ENCODE measurements at regions of chr3 and their contacts with region 1.

Region 1: DNA sequence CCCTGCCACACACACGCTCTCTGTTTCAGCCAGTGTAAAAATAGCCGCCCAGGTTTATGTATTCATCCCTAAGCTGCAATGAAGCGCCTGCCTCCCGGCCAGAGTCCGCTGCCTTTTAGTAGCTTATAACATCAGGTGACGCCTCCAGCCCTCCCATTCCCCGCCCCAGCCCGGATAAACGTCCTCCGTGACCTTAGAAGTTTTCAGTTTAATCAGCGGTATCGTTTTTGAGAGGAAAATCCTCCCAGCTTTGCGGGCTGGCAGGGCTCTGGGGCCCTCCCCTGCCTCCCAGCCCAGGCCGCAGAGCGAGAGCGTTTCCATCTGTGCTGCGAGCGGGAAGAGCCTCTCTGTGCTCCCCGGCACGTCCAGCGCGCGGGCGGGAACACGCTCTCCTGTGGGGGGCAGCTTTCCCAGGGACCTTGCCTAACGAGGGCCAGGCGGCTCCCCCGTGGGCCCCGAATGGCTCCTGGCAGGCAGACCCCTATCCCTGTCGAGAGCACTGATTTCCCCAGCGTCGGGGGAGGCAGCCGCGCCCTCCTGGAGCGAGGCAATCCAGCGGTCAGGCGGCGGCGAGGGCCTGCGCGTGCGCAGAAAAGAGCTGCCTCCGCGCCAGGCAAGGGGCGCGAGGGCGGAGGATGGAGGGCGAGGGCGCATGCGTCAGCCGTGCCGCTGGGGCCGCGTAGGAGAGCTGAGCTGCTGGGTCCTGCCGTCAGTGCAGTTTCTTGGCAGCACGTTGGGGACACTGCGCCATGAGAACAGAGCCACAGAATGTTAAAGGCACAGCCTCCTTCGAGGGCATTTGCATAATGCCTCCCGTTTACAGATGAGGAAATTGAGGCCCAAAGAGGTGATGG is 71.1 kb downstream of the CCNL1 start:
- DNase-seq: peak; percentile 94 to 95 (median 94)
- H3K4me3 ChIP-seq: peak overlapping the region; percentile 49 to 76
- H3K4me3 Mint-ChIP-seq: peak overlapping the region; percentile 79 to 93 (median 89)
- H3K27ac ChIP-seq: peak overlapping the region; percentile 91
- H3K27ac Mint-ChIP-seq: peak overlapping the region; percentile 99 to 100 (median 99)
- H3K4me1 ChIP-seq: peaks cover 41% of the 10 kb centered on the region
- H3K4me1 Mint-ChIP-seq: peaks cover 30 to 50% (median 41%) of the 10 kb centered on the region in 4 donors
- H3K27me3 ChIP-seq: no peaks in the 10 kb centered on the region
- H3K27me3 Mint-ChIP-seq: no peaks in the 10 kb centered on the region

Region 2: GRCh38 chr3:156816800-156817645 is 271.8 kb before region 1 on chr3:
- CTCF ChIA-PET with region 1: interaction called, 3 read pairs
- POLR2A ChIA-PET with region 1: interaction called, 32 read pairs
- intact Hi-C with region 1: loop called (anchors 2 kb)
- DNase-seq: peak; percentile 79 to 85 (median 84)
- H3K4me3 ChIP-seq: peak overlapping the region; percentile 43 to 59
- H3K4me3 Mint-ChIP-seq: peak overlapping the region; percentile 91 to 97 (median 96)
- H3K27ac ChIP-seq: peak overlapping the region; percentile 73
- H3K27ac Mint-ChIP-seq: peak overlapping the region; percentile 91 to 98 (median 94)
- H3K4me1 ChIP-seq: peaks cover 39% of the 10 kb centered on the region
- H3K4me1 Mint-ChIP-seq: peaks cover 22 to 45% (median 35%) of the 10 kb centered on the region in 4 donors
- H3K27me3 ChIP-seq: no peaks in the 10 kb centered on the region
- H3K27me3 Mint-ChIP-seq: no peaks in the 10 kb centered on the region

Region 3: GRCh38 chr3:157099326-157100095 is 10.7 kb after region 1 on chr3:
- CTCF ChIA-PET with region 1: interaction called, 18 read pairs
- POLR2A ChIA-PET with region 1: interaction called, 43 read pairs
- intact Hi-C with region 1: loop called (anchors 2 kb)
- DNase-seq: no peak
- H3K4me3 ChIP-seq: no peak overlapping the region
- H3K4me3 Mint-ChIP-seq: no peak overlapping the region
- H3K27ac ChIP-seq: no peak overlapping the region
- H3K27ac Mint-ChIP-seq: peak overlapping the region in 1 of 7 donors; percentile 15
- H3K4me1 ChIP-seq: peaks cover 19% of the 10 kb centered on the region
- H3K4me1 Mint-ChIP-seq: peaks cover 11 to 29% (median 17%) of the 10 kb centered on the region in 4 donors
- H3K27me3 ChIP-seq: no peaks in the 10 kb centered on the region
- H3K27me3 Mint-ChIP-seq: no peaks in the 10 kb centered on the region

Region 4: DNA sequence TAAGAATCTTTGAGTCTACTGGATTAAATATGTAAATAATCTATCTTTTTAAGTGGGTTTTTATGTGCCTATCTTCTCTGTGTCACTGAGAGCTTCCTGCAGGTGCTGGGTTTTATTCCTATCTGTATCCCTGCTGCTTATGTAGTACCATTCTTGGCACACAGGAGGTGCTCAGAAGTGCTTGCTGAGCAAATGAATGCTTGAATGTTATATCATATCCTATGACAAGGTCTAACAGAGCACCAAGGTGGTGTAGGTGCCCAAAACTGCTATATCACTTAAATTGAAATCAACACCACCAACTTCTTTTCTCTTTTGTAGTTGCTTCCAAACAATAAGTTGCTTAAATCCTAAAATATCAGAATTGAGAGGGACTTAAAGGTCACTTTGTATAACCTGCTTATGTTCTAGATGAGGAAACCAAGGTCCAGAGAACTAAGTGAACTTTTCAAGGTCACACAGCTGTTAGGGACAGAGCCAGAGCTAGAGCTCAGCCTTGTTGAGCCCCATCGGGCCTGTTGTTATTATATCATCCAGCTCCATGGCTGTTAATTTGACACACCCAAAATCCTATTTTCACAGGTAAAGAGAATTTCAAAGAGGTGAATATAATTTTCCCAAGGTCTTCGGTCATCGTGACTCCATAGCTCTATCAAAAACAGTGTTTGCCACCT is 25.1 kb after region 1 on chr3:
- CTCF ChIA-PET with region 1: interaction called, 10 read pairs
- POLR2A ChIA-PET with region 1: interaction called, 25 read pairs
- intact Hi-C with region 1: no loop called
- DNase-seq: no peak
- H3K4me3 ChIP-seq: no peak overlapping the region
- H3K4me3 Mint-ChIP-seq: no peak overlapping the region
- H3K27ac ChIP-seq: no peak overlapping the region
- H3K27ac Mint-ChIP-seq: peak overlapping the region in 2 of 7 donors; percentile 15 to 32
- H3K4me1 ChIP-seq: no peaks in the 10 kb centered on the region
- H3K4me1 Mint-ChIP-seq: peaks cover 0 to 4% (median 0%) of the 10 kb centered on the region in 4 donors
- H3K27me3 ChIP-seq: no peaks in the 10 kb centered on the region
- H3K27me3 Mint-ChIP-seq: peaks cover 0 to 4% of the 10 kb centered on the region in 2 donors

Region 5: DNA sequence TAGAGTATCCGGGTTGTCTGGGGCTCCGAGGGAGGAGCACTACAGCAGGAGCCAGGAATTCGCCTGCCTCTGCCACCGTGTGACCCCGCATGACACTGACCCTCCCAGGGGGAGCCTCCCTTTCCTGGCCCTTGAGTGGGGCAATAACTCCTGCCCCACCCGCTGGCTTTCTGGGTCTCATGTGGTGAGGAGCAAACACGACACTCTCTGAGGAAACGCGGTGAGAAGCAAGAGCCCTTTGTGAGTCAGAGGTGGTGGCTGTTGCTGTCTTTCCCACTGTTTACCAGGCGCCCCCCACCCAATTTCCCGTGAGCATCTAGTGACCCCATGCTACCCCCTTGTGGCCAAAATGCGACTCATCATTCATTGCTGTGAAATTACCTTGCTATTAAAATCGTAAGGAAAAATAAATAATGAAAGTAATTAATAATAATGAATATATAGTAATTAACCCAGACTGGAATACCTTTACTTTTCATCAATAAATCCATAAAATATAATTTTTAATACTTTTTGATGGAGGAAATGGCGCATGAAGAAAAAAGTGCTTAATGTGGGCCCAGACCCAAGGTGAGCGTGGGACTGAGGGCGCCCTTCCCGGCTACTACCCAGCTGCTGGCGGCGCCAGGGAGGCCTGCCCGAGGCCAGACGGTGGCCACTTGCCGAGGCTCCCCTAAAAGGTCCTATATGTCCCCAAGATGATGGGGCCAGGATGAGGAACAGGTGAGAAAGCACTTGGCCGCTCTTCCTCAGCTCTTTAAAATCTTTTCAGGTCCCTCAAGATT is 41.8 kb after region 1 on chr3:
- CTCF ChIA-PET with region 1: interaction called, 346 read pairs
- POLR2A ChIA-PET with region 1: interaction called, 104 read pairs
- intact Hi-C with region 1: loop called (anchors 1 kb)
- DNase-seq: peak; percentile 81 to 94 (median 84)
- H3K4me3 ChIP-seq: peak overlapping the region; percentile 4 to 45
- H3K4me3 Mint-ChIP-seq: peak overlapping the region; percentile 50 to 91 (median 76)
- H3K27ac ChIP-seq: peak overlapping the region; percentile 83
- H3K27ac Mint-ChIP-seq: peak overlapping the region; percentile 95 to 99 (median 97)
- H3K4me1 ChIP-seq: peaks cover 73% of the 10 kb centered on the region
- H3K4me1 Mint-ChIP-seq: peaks cover 48 to 86% (median 66%) of the 10 kb centered on the region in 4 donors
- H3K27me3 ChIP-seq: no peaks in the 10 kb centered on the region
- H3K27me3 Mint-ChIP-seq: no peaks in the 10 kb centered on the region

Region 6: GRCh38 chr3:157174649-157175498 is 86.0 kb after region 1 on chr3:
- CTCF ChIA-PET with region 1: interaction called, 4 read pairs
- POLR2A ChIA-PET with region 1: interaction called, 27 read pairs
- intact Hi-C with region 1: loop called (anchors 1 kb)
- DNase-seq: peak; percentile 95 to 99 (median 99)
- H3K4me3 ChIP-seq: peak overlapping the region; percentile 82 to 95
- H3K4me3 Mint-ChIP-seq: peak overlapping the region; percentile 85 to 96 (median 93)
- H3K27ac ChIP-seq: peak overlapping the region; percentile 94
- H3K27ac Mint-ChIP-seq: peak overlapping the region; percentile 94 to 99 (median 98)
- H3K4me1 ChIP-seq: peaks cover 22% of the 10 kb centered on the region
- H3K4me1 Mint-ChIP-seq: peaks cover 10 to 30% (median 21%) of the 10 kb centered on the region in 4 donors
- H3K27me3 ChIP-seq: no peaks in the 10 kb centered on the region
- H3K27me3 Mint-ChIP-seq: no peaks in the 10 kb centered on the region

Measured in CD4-positive, alpha-beta memory T cell (primary cell).